ENCODE measurements at regions of chr5 and their contacts with region 1.

Region 1: DNA sequence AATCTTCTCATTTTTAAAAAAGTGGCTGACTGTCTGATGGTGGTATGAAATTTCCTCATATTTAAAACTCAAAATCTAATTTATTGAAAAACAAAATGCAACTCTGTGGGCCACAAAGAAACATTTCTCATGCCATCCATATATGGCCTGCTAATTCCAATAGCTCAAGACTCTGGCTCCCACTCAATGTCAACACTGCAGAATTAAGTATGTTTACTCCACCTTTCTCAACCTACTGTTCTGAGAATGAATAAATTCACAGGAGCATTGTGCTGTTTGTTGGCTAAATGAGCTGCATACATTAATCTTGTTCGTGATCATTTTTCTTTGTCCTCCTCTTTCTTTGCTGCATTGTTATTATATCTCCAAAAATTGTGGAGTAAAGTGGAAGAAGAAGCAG is 79.5 kb upstream of the GABRG2 start:
- DNase-seq: no peak
- H3K4me3 ChIP-seq: no peak overlapping the region
- H3K27ac ChIP-seq: no peak overlapping the region
- H3K4me1 ChIP-seq: no peaks in the 10 kb centered on the region
- H3K27me3 ChIP-seq: no peaks in the 10 kb centered on the region
- CTCF ChIP-seq: no peak
- POLR2A ChIP-seq: no peak

Region 2: GRCh38 chr5:161889971-161890370 is 98.1 kb before region 1 on chr5:
- intact Hi-C with region 1: no loop called
- DNase-seq: no peak
- H3K4me3 ChIP-seq: no peak overlapping the region
- H3K27ac ChIP-seq: no peak overlapping the region
- H3K4me1 ChIP-seq: no peaks in the 10 kb centered on the region
- H3K27me3 ChIP-seq: no peaks in the 10 kb centered on the region
- CTCF ChIP-seq: no peak
- POLR2A ChIP-seq: no peak

Region 3: GRCh38 chr5:161966564-161966963 is 21.5 kb before region 1 on chr5:
- intact Hi-C with region 1: loop called (anchors 2 kb)
- DNase-seq: no peak
- H3K4me3 ChIP-seq: no peak overlapping the region
- H3K27ac ChIP-seq: no peak overlapping the region
- H3K4me1 ChIP-seq: no peaks in the 10 kb centered on the region
- H3K27me3 ChIP-seq: no peaks in the 10 kb centered on the region
- CTCF ChIP-seq: no peak
- POLR2A ChIP-seq: no peak